B cell (primary cell): ENCODE measurements at regions of chr19 and their contacts with region 1.

Region 1: GRCh38 chr19:2944775-2945574 is at the start of gene ZNF77:
- DNase-seq: peak; percentile 99
- ATAC-seq: peak; percentile 97
- H3K4me3 ChIP-seq: peak within 1 kb of the TSS; percentile 3 to 87 (median 79)
- H3K4me3 Mint-ChIP-seq: peak within 1 kb of the TSS; percentile 97
- H3K27ac ChIP-seq: peak within 1 kb of the TSS; percentile 81 to 94
- H3K27ac Mint-ChIP-seq: peak within 1 kb of the TSS; percentile 96
- H3K4me1 ChIP-seq: peaks cover 14 to 28% of the 10 kb centered on the region in 2 donors
- H3K4me1 Mint-ChIP-seq: peaks cover 35% of the 10 kb centered on the region
- H3K27me3 ChIP-seq: no peaks in the 10 kb centered on the region
- H3K27me3 Mint-ChIP-seq: no peaks in the 10 kb centered on the region
- CTCF ChIP-seq: no peak
- total RNA-seq, gene ZNF77: 6.4 and 8.5 TPM in 2 replicates

Region 2: DNA sequence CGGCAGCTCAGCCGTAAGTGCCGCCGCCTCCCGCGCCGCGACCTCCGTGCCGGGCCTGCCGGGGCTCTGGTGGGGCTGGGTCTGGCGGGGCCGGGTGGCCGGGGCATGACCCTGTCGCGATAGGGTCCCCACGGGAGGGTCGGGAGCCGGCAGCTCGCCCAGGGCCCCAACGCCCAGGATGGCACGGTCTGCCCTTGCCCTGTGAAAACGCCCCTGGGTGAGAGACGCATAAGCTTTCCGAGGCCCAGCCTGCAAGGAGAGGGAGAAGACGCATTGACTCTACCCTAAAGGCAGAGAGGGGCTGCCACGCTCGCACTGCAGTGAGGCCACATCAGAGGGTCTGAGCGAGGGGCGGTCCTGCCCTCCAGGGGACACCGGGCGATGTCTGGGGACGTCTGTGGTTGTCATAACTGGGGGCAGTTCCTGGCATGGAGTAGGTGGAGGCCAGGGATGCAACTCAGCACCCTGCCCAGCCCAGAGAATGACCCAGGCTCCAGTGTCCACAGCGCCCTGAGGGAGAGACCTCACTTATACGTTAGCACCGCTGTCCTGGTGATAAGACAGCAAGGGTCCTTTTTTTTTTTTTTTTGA is 124.8 kb before region 1 on chr19:
- CTCF ChIA-PET with region 1: no interaction called
- POLR2A ChIA-PET with region 1: no interaction called
- intact Hi-C with region 1: no loop called
- DNase-seq: no peak
- ATAC-seq: no peak
- H3K4me3 ChIP-seq: peak overlapping the region; percentile 19 to 81 (median 60)
- H3K4me3 Mint-ChIP-seq: peak overlapping the region; percentile 85
- H3K27ac ChIP-seq: no peak overlapping the region
- H3K27ac Mint-ChIP-seq: no peak overlapping the region
- H3K4me1 ChIP-seq: peaks cover 4 to 18% of the 10 kb centered on the region in 2 donors
- H3K4me1 Mint-ChIP-seq: peaks cover 9% of the 10 kb centered on the region
- H3K27me3 ChIP-seq: no peaks in the 10 kb centered on the region
- H3K27me3 Mint-ChIP-seq: no peaks in the 10 kb centered on the region
- CTCF ChIP-seq: no peak

Region 3: DNA sequence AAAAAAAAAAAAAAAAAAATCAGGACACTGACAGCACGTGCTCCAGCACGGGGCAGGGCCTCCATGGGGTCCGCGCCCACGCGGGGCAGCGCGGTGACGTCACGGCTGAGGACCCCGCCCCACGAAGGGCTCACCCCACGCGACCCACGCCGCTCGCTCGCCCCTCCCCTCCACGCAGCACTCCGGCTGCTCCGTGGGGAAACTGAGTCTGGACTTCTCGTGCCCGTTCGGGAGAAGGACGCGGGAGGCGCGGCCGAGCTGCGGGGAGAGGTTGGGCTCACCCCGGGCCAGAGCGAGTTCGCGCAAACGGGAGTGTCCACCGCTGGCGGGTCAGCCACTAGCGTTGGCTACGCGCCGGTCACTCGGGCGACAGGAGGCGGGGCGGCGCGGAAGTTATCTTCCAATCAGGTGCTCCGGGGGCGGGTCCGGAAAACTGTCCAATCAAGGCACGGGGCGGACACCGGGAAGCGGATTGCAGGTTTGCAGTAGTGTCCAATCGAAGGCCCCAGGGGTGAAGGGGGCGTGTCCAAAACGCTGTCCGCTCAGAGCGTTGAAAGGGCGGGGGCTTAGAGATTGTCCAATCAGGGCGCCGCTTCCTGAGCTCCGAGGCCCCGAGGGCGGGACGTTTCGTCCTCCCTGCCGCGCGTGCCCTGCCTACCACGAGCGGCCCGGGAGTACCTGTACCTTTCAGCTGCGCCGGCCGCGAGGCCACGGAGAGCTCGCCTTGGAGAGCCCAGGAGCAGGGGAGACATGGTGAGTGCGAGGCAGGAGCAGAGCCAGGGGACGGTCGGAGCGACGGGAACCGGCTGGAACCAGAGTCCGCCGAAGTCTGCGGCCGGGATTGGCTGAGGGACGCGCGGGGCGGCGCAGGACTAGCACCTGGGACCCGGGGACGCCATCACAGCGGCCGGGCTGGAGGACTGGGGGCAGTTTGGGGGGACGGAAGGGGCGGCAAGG is 44.4 kb before region 1 on chr19 and contains the start of gene ZNF57:
- CTCF ChIA-PET with region 1: no interaction called
- POLR2A ChIA-PET with region 1: interaction called, 6 read pairs
- intact Hi-C with region 1: loop called (anchors 1 kb)
- DNase-seq: peak; percentile 98
- ATAC-seq: peak; percentile 99
- H3K4me3 ChIP-seq: peak within 1 kb of the TSS in 4 of 5 experiments; percentile 65 to 86 (median 74)
- H3K4me3 Mint-ChIP-seq: peak within 1 kb of the TSS; percentile 99
- H3K27ac ChIP-seq: peak within 1 kb of the TSS in 1 of 2 donors; percentile 68
- H3K27ac Mint-ChIP-seq: peak within 1 kb of the TSS; percentile 94
- H3K4me1 ChIP-seq: peaks cover 6 to 14% of the 10 kb centered on the region in 2 donors
- H3K4me1 Mint-ChIP-seq: peaks cover 18% of the 10 kb centered on the region
- H3K27me3 ChIP-seq: no peaks in the 10 kb centered on the region
- H3K27me3 Mint-ChIP-seq: no peaks in the 10 kb centered on the region
- CTCF ChIP-seq: no peak
- total RNA-seq, gene ZNF57: 3.4 and 3.8 TPM in 2 replicates